Esophagus muscularis mucosa (tissue), 4 donors: ENCODE measurements at regions of chr13 and their contacts with region 1.

Region 1: DNA sequence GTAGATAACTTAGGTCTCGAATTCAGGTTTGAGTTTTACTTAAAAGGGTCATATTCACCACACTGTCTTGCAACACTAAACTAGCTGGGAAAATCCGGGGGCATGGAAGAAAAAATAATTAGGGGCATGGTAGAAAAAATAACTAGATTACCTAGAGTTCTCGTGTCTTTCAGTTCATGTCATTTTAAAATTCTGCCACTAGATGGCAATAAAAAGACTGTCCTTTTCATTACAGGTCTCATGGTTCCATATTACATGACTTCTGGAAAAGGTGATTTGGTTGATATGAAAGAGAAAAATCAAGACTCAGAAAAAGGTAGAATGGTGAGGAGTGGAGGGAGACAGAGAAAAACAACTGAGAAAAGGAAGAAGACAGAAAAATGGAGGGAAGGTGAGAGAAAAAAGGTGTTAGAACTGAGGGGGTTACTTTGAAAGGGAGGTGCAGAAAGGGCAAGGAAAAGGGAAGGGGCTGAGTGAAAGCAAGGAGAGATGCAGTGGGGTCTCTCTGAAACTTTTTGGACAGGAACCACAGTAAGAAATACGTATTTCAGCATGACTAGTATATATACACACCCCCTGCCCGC is 299.0 kb downstream of the KLF12 start:
- DNase-seq: no peak
- H3K4me3 ChIP-seq: no peak overlapping the region
- H3K27ac ChIP-seq: no peak overlapping the region
- H3K4me1 ChIP-seq: peaks cover 0 to 25% (median 12%) of the 10 kb centered on the region in 4 donors
- H3K27me3 ChIP-seq: no peaks in the 10 kb centered on the region
- CTCF ChIP-seq: peak; percentile 64 to 73 (median 68)
- EP300 ChIP-seq: no peak
- POLR2A ChIP-seq: no peak

Region 2: DNA sequence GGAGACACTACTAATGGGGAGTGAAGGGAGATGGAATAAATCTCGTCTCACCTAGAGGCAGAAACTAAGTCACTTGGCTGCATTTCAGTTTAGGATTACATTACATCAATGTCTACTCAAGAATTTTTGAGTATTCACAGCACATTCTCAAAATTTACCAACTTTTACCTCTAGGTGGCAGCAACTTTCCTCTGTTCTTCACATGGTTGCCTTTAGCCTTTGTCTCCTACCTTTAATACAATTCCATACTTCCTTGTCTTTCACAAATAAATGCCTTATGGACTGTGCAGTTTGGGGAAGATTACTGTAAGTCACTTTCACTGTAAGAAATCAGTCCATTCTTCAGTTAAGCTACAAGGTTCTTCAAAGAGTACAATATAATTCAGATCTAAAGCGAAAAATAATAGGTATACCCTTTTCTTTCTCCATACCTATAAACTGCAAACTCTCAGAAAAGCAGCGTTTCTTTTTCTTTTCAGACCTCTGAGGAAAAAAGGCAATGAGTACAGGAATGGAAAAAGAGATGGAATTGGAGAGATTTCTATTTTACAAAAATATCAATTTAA is 80.4 kb before region 1 on chr13:
- intact Hi-C with region 1: loop called (anchors 5 kb)
- DNase-seq: no peak
- H3K4me3 ChIP-seq: no peak overlapping the region
- H3K27ac ChIP-seq: no peak overlapping the region
- H3K4me1 ChIP-seq: peaks cover 0 to 56% (median 42%) of the 10 kb centered on the region in 4 donors
- H3K27me3 ChIP-seq: no peaks in the 10 kb centered on the region
- CTCF ChIP-seq: peak; percentile 54 to 69 (median 64)
- EP300 ChIP-seq: no peak
- POLR2A ChIP-seq: no peak